ENCODE measurements at regions of chr4 and their contacts with region 1.

Region 1: GRCh38 chr4:98928505-98929340 is at the start of gene EIF4E:
- DNase-seq: peak; percentile 97 to 98
- ATAC-seq: peak; percentile 91 to 98 (median 96)
- H3K4me3 ChIP-seq: peak within 1 kb of the TSS; percentile 82 to 97 (median 91)
- H3K27ac ChIP-seq: peak within 1 kb of the TSS; percentile 79 to 96 (median 93)
- H3K4me1 ChIP-seq: peaks cover 0 to 52% (median 24%) of the 10 kb centered on the region in 9 donors
- H3K27me3 ChIP-seq: no peaks in the 10 kb centered on the region
- CTCF ChIP-seq: peak in 6 of 9 donors; percentile 14 to 40 (median 32)
- total RNA-seq, gene EIF4E: 48.7 to 70.4 (median 58.4) TPM

Region 2: GRCh38 chr4:98260579-98261290 is 668.0 kb before region 1 on chr4:
- intact Hi-C with region 1: loop called in 1 of 10 experiments (anchors 5 kb)
- DNase-seq: peak; percentile 96 to 97
- ATAC-seq: peak; percentile 97 to 99 (median 98)
- H3K4me3 ChIP-seq: peak overlapping the region; percentile 46 to 93 (median 82)
- H3K27ac ChIP-seq: peak overlapping the region; percentile 74 to 100 (median 98)
- H3K4me1 ChIP-seq: peaks cover 0 to 41% (median 19%) of the 10 kb centered on the region in 9 donors
- H3K27me3 ChIP-seq: no peaks in the 10 kb centered on the region
- CTCF ChIP-seq: no peak

Region 3: GRCh38 chr4:98658287-98659105 is 270.2 kb before region 1 on chr4 and contains the start of gene TSPAN5:
- intact Hi-C with region 1: loop called in 1 of 10 experiments (anchors 5 kb)
- DNase-seq: peak; percentile 69 to 82
- ATAC-seq: peak; percentile 90 to 97 (median 94)
- H3K4me3 ChIP-seq: peak within 1 kb of the TSS; percentile 37 to 91 (median 72)
- H3K27ac ChIP-seq: peak within 1 kb of the TSS in 9 of 10 donors; percentile 44 to 84 (median 68)
- H3K4me1 ChIP-seq: peaks cover 5 to 54% (median 19%) of the 10 kb centered on the region in 9 donors
- H3K27me3 ChIP-seq: peaks cover 0 to 36% (median 0%) of the 10 kb centered on the region in 7 donors
- CTCF ChIP-seq: no peak
- total RNA-seq, gene TSPAN5: 0.85 to 6.7 (median 4.4) TPM

Region 4: GRCh38 chr4:98995183-98996055 is 66.7 kb after region 1 on chr4 and contains the start of gene METAP1:
- intact Hi-C with region 1: loop called in 7 of 10 experiments (anchors 2 to 10 kb)
- DNase-seq: peak; percentile 90 to 94
- ATAC-seq: peak; percentile 94 to 98 (median 96)
- H3K4me3 ChIP-seq: peak within 1 kb of the TSS; percentile 73 to 99 (median 96)
- H3K27ac ChIP-seq: peak within 1 kb of the TSS; percentile 86 to 95 (median 93)
- H3K4me1 ChIP-seq: peaks cover 0 to 28% (median 13%) of the 10 kb centered on the region in 9 donors
- H3K27me3 ChIP-seq: no peaks in the 10 kb centered on the region
- CTCF ChIP-seq: peak; percentile 5 to 80 (median 49)
- total RNA-seq, gene METAP1: 54.2 to 79.7 (median 60.9) TPM

Region 5: GRCh38 chr4:99088481-99089365 is 160.0 kb after region 1 on chr4 and contains the start of gene ADH5:
- intact Hi-C with region 1: loop called in 1 of 10 experiments (anchors 10 kb)
- DNase-seq: peak; percentile 90 to 91
- ATAC-seq: peak; percentile 97 to 100 (median 99)
- H3K4me3 ChIP-seq: peak within 1 kb of the TSS; percentile 63 to 86 (median 76)
- H3K27ac ChIP-seq: peak within 1 kb of the TSS; percentile 90 to 97 (median 94)
- H3K4me1 ChIP-seq: peaks cover 0 to 61% (median 54%) of the 10 kb centered on the region in 9 donors
- H3K27me3 ChIP-seq: no peaks in the 10 kb centered on the region
- CTCF ChIP-seq: no peak
- total RNA-seq, gene ADH5: 150 to 254 (median 204) TPM